Posterior vena cava (tissue), 2 donors: ENCODE measurements at regions of chr10 and their contacts with region 1.

Region 1: DNA sequence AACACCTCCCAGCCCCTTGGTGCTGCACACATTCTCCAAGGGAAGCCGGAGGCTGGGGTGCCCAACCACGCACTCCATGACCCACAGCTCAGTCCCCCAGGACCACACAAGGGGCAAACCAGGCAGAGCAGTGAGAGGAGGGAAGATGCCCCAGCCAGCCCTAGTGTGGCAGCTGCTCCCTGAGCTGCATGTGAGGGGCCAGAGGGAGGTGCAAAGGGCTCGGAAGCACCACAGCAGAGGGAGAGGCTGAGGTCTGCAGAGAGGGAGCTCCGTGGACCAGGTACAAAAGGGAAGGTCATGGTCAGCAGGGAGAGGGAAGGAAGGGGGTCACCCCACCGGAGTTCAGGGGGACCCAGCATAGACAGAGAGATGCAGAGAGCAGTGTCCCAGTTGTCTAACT is 1.5 kb upstream of the CALML5 start:
- DNase-seq: peak; percentile 41

Region 2: GRCh38 chr10:5548527-5549223 is 47.8 kb after region 1 on chr10:
- intact Hi-C with region 1: loop called in 1 of 2 experiments (anchors 1 kb)
- DNase-seq: peak; percentile 91